ENCODE measurements at regions of chr6 and their contacts with region 1.

Region 1: DNA sequence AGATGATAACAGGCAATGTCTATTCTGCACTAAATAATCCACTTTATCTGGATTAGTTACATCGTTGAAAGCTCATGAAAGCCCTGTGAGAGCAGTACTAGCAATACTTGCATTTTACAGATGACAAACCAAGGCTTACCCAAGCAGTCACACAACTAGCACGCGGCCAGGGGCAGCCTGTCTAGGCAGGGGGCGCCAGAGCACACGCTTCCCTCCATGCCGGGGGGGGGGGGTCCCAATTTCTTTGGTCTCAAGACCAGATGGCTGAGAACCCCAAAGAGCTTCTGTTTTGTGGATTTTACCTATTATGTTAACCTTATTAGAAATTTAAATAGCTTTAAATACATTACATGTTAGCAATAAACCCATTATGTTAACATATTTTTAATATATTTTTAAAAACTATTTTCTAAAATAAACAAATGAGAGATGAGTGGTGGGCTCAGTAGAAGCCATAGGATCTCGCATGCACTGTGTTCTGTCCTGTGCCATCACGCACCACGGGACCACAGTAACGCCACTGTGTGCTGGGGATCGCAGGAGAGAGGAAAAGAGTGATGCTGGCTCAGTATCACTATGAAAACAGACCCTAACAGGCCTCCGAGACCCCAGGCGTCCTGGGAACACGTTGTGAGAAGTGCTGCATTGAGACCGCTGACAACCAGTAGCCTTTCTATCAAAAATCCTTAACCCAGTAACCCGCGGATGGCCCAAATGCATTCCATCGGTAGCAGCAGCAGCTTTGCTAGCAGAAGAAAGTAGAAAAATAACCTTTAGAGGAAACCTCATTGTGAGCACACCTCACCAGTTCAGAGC is 5.3 kb upstream of the PRR18 start:
- DNase-seq: peak; percentile 18 to 31
- ATAC-seq: peak; percentile 50 to 72; a peak in 4 of 6 replicates
- H3K4me3 ChIP-seq: no peak overlapping the region
- H3K27ac ChIP-seq: no peak overlapping the region
- H3K4me1 ChIP-seq: no peaks in the 10 kb centered on the region; the same call in 2 of the 3 replicates
- CTCF ChIP-seq: peak; percentile 40; the same call in 2 of the 3 replicates
- EP300 ChIP-seq: no peak
- POLR2A ChIP-seq: no peak
- RAD21 ChIP-seq: peak; percentile 38 to 45; a peak in 3 of 5 replicates

Region 2: GRCh38 chr6:165468836-165469235 is 844.6 kb before region 1 on chr6:
- CTCF ChIA-PET with region 1: no interaction called
- POLR2A ChIA-PET with region 1: no interaction called
- DNase-seq: no peak
- ATAC-seq: no peak
- H3K4me3 ChIP-seq: no peak overlapping the region
- H3K27ac ChIP-seq: no peak overlapping the region
- H3K4me1 ChIP-seq: 0 out of 3 replicates have a peak, but pooled peaks cover 2% of the 10 kb centered on the region
- CTCF ChIP-seq: no peak
- EP300 ChIP-seq: no peak
- POLR2A ChIP-seq: no peak
- RAD21 ChIP-seq: no peak

Region 3: DNA sequence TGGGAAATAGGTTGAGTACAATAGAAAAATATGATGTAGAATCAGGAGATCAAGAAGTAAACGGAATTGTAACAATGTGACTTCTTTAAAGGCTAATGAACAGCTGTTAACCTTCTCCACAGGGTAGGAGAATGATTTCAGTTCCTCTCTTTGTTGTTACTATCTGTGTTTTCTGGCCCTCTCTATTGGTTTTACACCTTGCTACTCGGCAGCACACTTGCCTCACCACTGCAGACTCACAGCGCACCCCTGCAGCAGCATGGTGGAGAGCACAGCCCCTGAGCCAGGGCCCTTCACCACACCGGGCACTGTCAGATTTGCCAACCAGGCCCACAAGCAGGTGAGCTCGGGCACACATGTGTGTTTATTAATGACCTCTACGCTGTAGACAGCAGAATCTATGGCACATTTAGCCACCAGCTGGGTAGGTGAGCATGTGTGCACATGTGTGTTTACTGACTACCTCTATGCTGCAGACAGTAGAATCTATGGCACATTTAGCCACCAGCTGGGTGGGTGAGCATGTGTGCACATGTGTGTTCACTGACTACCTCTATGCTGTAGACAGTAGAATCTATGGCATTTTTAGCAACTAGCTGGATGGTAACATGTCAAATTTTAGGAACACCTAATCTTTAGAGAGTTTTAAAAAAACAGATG is 12.1 kb after region 1 on chr6:
- CTCF ChIA-PET with region 1: interaction called, 19 read pairs
- POLR2A ChIA-PET with region 1: no interaction called
- DNase-seq: no peak
- ATAC-seq: no peak
- H3K4me3 ChIP-seq: no peak overlapping the region
- H3K27ac ChIP-seq: no peak overlapping the region
- H3K4me1 ChIP-seq: no peaks in the 10 kb centered on the region
- CTCF ChIP-seq: no peak
- EP300 ChIP-seq: no peak
- POLR2A ChIP-seq: no peak
- RAD21 ChIP-seq: no peak

Region 4: GRCh38 chr6:166375013-166375412 is 61.5 kb after region 1 on chr6:
- CTCF ChIA-PET with region 1: no interaction called
- POLR2A ChIA-PET with region 1: no interaction called
- DNase-seq: no peak
- ATAC-seq: no peak
- H3K4me3 ChIP-seq: no peak overlapping the region
- H3K27ac ChIP-seq: no peak overlapping the region
- H3K4me1 ChIP-seq: no peaks in the 10 kb centered on the region
- CTCF ChIP-seq: no peak
- EP300 ChIP-seq: no peak
- POLR2A ChIP-seq: no peak
- RAD21 ChIP-seq: no peak

Region 5: GRCh38 chr6:166419286-166419685 is 105.8 kb after region 1 on chr6:
- CTCF ChIA-PET with region 1: no interaction called
- POLR2A ChIA-PET with region 1: no interaction called
- DNase-seq: no peak
- ATAC-seq: no peak
- H3K4me3 ChIP-seq: no peak overlapping the region
- H3K27ac ChIP-seq: no peak overlapping the region
- H3K4me1 ChIP-seq: no peaks in the 10 kb centered on the region
- CTCF ChIP-seq: no peak
- EP300 ChIP-seq: no peak
- POLR2A ChIP-seq: no peak
- RAD21 ChIP-seq: no peak

Region 6: DNA sequence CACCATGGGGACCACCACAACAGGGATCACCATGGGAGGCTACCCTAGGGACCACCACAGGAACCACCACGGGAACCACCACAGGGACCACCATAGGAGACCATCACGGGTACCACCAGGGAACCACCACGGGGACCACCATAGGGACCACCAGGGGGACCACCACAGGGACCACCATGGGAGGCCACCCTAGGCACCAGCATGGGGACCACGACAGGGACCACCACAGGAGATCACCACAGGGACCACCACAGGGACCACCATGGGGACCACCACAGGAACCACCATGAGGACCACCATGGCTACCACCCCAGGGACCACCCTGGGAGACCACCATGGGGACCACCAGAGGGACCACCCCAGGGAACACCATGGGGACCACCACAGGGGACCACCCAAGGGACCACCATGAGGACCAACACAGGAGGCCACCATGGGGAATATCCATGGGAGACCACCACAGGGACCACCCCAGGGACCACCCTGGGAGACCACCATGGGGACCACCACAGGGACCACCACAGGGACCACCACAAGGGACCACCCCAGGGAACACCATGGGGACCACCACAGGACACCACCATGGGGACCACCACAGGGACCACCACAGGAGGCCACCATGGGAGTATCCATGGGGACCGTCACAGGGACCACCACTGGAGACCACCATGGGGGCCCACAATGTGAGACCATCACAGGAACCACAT is 136.9 kb after region 1 on chr6:
- CTCF ChIA-PET with region 1: no interaction called
- POLR2A ChIA-PET with region 1: no interaction called
- DNase-seq: no peak
- ATAC-seq: no peak
- H3K4me3 ChIP-seq: no peak overlapping the region
- H3K27ac ChIP-seq: no peak overlapping the region
- H3K4me1 ChIP-seq: no peaks in the 10 kb centered on the region
- CTCF ChIP-seq: no peak
- EP300 ChIP-seq: no peak
- POLR2A ChIP-seq: no peak
- RAD21 ChIP-seq: no peak